IMR-90 (cell line): ENCODE measurements at regions of chr17 and their contacts with region 1.

Region 1: DNA sequence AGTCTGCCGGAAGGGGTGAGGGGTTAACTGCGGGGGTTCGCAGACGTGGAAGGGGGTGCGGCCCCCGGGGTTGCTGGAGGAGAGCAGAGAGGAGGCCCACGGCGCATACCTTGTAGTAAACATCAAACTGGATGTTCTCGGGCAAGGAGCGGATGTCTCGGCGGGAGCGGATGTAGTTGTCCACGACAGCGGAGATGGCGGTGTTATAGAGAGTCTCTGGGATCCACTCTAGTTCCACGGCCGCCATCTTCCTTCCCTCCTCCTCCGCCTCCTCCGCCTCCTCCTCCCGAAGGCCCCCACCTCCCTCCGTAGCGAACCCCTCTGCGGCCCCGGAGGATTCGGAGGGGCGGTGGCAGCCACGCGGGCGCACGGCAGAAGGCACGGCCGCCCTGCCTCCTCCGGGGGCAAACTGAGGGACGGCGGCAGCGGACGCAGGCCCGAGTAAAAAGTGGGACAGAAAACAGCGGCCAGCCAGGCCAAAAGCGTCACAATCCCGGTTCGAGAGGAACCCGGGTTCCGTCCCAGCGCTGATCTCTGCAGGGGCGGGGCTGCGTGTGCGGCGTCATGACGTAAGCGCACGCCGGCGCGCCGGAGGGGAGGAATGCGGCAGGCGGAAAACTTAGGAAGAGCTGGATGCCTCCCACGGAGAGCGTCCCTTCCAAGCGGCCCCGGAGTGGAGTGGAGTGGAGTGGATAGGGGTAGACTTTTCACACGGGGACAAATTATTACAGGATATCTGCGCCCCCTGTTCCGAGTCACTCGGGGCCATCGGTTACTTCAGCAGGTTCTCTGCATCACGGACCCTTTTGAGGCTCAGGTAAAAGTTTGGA is at the start of gene APPBP2:
- DNase-seq: peak; percentile 85
- ATAC-seq: peak; percentile 94
- H3K4me3 ChIP-seq: peak within 1 kb of the TSS; percentile 95
- H3K27ac ChIP-seq: peak within 1 kb of the TSS; percentile 93
- H3K4me1 ChIP-seq: peaks cover 6% of the 10 kb centered on the region; the same call in 1 of the 2 replicates
- H3K27me3 ChIP-seq: no peaks in the 10 kb centered on the region
- CTCF ChIP-seq: no peak
- POLR2A ChIP-seq: peak; percentile 94
- RAD21 ChIP-seq: no peak
- total RNA-seq, gene APPBP2: 86.7 and 93.9 TPM in 2 replicates

Region 2: DNA sequence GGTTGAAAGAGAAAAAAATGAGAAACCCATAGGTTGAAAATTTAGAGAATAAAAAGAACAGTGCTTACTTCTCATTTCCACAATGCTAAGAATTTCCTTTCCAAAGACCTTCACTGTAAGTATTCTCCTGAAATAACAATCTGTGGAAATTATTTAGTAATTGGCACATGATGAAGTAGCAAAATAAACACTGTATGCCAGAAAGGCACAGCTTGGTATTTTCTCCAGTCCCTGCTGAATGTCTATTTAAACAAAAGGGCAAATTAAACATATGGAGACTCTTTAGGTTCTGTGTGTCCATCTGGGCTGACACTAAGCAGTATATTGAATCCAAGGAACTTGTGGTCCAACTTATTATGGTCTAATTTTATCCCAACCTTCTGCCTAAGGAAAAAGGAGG is 57.5 kb before region 1 on chr17:
- CTCF ChIA-PET with region 1: no interaction called
- POLR2A ChIA-PET with region 1: no interaction called
- dilution Hi-C with region 1: no loop called
- in situ Hi-C with region 1: no loop called
- intact Hi-C with region 1: loop called (anchors 2 kb)
- DNase-seq: peak; percentile 43
- ATAC-seq: peak; percentile 56
- H3K4me3 ChIP-seq: no peak overlapping the region
- H3K27ac ChIP-seq: peak overlapping the region; percentile 99; the same call in 1 of the 2 replicates
- H3K4me1 ChIP-seq: peaks cover 8% of the 10 kb centered on the region
- H3K27me3 ChIP-seq: no peaks in the 10 kb centered on the region
- CTCF ChIP-seq: no peak
- POLR2A ChIP-seq: no peak
- RAD21 ChIP-seq: no peak

Region 3: DNA sequence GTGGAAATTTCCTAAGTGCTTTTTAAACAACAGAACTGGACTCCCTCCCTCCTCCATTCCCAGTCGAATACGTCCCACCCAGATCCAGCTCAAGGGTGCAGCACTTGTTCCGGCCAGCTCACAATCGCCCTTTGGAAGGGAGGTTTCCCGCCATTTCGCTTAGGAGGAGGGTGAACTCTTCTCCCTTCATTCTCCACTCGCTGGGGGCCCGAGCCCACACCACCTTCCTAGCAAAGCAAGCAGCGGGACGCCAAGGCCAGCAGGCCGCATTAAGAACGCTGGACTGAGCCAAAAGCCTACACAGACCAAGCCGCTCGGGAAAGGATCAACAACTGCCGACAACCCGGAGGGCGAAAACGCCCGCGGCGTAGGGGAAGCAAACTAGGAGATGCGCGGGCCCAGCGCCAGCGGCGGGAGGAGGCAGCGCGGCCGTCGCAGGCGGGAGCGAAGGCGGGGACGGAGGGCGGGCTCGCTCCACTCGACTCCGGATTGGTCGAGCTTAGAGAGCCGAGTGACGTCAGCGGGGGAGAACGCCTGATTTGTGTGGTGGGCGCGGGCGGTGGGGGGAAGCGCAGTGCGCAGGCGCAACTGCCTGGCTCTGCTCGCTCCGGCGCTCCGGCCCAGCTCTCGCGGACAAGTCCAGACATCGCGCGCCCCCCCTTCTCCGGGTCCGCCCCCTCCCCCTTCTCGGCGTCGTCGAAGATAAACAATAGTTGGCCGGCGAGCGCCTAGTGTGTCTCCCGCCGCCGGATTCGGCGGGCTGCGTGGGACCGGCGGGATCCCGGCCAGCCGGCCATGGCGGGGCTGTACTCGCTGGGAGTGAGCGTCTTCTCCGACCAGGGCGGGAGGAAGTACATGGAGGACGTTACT is 74.0 kb after region 1 on chr17 and contains the start of gene PPM1D:
- CTCF ChIA-PET with region 1: no interaction called
- POLR2A ChIA-PET with region 1: no interaction called
- dilution Hi-C with region 1: no loop called
- in situ Hi-C with region 1: no loop called
- intact Hi-C with region 1: loop called (anchors 2 kb)
- DNase-seq: peak; percentile 99
- ATAC-seq: peak; percentile 95
- H3K4me3 ChIP-seq: peak within 1 kb of the TSS; percentile 97
- H3K27ac ChIP-seq: peak within 1 kb of the TSS; percentile 93
- H3K4me1 ChIP-seq: peaks cover 2% of the 10 kb centered on the region; the same call in 1 of the 2 replicates
- H3K27me3 ChIP-seq: no peaks in the 10 kb centered on the region
- CTCF ChIP-seq: no peak
- POLR2A ChIP-seq: peak; percentile 82
- RAD21 ChIP-seq: no peak
- total RNA-seq, gene PPM1D: 15.8 and 16.1 TPM in 2 replicates

Region 4: DNA sequence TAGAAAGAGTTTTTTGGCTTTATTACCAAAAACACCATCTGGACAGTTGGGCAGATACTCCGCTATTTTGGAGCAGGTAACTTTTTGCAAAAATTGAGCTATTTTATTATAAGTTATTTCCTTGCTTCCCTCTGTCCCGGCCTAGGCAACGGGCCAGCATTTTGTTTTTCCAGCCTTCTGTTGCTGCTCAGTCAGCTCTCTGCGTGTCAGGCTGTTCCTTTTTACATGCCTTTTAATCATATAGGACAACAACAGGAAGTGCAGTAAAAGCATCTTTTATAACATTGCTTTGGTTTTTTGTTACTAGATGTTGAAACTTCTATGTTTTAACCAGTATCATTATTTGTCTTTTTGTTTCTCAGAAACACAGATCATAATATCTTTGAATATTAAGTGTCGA is 104.5 kb after region 1 on chr17:
- CTCF ChIA-PET with region 1: no interaction called
- POLR2A ChIA-PET with region 1: no interaction called
- dilution Hi-C with region 1: no loop called
- in situ Hi-C with region 1: loop called (anchors 10 kb)
- intact Hi-C with region 1: loop called (anchors 5 kb)
- DNase-seq: no peak
- ATAC-seq: no peak
- H3K4me3 ChIP-seq: no peak overlapping the region
- H3K27ac ChIP-seq: no peak overlapping the region
- H3K4me1 ChIP-seq: peaks cover 4% of the 10 kb centered on the region
- H3K27me3 ChIP-seq: no peaks in the 10 kb centered on the region
- CTCF ChIP-seq: no peak
- POLR2A ChIP-seq: no peak
- RAD21 ChIP-seq: no peak

Region 5: DNA sequence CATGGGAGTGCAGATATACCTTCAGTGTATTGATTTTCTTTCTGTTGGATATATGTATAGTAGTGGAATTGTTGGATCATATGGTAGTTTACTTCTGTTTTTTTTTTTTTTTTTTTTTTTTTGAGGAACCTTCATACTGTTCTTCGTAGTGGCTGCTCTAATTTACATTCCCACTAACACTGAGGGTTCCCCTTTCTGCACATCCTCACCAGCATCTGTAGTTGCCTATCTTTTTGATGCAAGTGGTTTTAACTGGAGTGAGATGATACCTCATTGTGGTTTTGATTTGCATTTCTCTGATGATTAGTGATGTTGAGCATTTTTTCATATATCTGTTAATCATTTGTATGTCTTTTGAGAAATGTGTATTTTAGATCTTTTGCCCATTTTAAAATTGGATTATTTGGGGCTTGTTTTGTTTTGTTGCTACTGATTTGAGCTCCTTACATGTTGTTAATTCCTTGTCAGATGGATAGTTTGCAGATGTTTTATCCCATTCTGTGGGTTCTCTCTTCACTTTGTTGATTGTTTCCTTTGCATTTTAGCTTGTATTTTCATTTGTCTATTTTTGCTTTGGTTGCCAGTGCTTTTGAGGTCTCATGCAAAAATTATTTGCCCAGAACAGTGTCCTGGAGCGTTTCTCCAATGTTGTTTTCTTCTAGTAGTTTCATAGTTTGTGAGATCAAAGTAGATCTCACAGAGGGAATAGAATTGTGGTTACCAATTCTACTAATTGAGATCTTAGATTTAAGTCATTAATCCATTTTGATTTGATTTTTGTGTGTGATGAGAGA is 126.8 kb after region 1 on chr17:
- CTCF ChIA-PET with region 1: no interaction called
- POLR2A ChIA-PET with region 1: no interaction called
- dilution Hi-C with region 1: no loop called
- in situ Hi-C with region 1: no loop called
- intact Hi-C with region 1: no loop called
- DNase-seq: no peak
- ATAC-seq: no peak
- H3K4me3 ChIP-seq: no peak overlapping the region
- H3K27ac ChIP-seq: no peak overlapping the region
- H3K4me1 ChIP-seq: no peaks in the 10 kb centered on the region
- H3K27me3 ChIP-seq: no peaks in the 10 kb centered on the region
- CTCF ChIP-seq: no peak
- POLR2A ChIP-seq: no peak
- RAD21 ChIP-seq: no peak

Region 6: DNA sequence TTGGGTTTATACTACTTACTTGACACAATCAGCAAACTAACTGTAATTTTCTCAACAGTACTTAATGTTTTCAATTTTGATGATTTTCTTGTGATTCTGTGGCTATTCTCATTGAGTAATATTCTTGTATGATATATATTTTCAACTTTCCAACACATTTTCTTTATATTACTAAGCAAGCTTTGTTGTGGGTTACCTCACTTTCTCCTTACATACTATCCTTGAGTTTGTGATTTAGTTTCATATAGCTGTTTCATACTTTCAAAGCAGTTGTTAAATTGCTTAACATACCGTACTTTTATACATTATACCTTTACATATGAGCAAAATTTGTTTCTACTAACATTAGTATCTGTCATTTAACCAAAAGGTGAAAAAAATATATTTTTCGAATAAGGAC is 348.9 kb after region 1 on chr17:
- CTCF ChIA-PET with region 1: no interaction called
- POLR2A ChIA-PET with region 1: no interaction called
- dilution Hi-C with region 1: no loop called
- in situ Hi-C with region 1: no loop called
- intact Hi-C with region 1: no loop called
- DNase-seq: no peak
- ATAC-seq: no peak
- H3K4me3 ChIP-seq: no peak overlapping the region
- H3K27ac ChIP-seq: no peak overlapping the region
- H3K4me1 ChIP-seq: no peaks in the 10 kb centered on the region
- H3K27me3 ChIP-seq: no peaks in the 10 kb centered on the region
- CTCF ChIP-seq: no peak
- POLR2A ChIP-seq: no peak
- RAD21 ChIP-seq: no peak